Activated B cell treated with CpG ODN at 0.5 μM for 24 hours (primary cell): ENCODE measurements at regions of chr5 and their contacts with region 1.

Region 1: DNA sequence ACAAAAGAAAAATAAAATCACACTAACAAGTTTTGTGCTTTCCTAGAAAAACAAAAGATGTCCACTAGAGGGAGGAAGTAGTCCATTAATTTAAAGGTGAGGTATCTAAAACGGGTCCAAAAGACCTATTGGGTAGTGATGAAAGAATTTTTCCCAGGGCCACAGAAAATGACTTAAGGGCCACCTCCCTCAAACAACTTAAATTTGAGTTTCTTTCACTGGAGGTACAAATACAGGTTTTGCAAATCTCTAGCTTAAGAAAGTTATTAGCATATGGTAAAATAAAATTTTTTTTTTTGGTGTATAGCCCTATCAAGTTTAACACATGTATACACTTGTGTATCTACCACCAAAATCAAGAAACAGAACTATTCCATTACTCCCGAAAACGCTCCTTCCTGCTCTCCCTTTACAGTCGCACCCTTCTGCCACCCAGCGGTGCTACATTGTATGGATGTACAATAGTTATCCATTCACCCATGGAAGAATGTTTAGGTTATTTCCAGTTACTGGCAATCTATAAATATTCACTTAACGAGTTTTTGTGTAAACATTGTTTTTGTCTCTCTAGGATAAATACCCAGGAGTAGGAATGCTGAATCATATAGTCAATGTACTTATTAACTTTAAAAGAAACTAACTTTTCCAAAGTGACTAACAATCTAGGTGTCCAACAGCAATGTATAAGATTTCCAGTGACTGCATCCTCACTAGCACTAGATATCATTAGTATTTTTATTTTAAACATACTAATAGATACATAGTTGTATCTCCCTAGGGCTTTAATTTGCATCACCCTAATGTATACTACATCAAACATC is 21.9 kb downstream of the DEPDC1B start:
- DNase-seq: no peak
- ATAC-seq: no peak
- H3K4me3 Mint-ChIP-seq: no peak overlapping the region
- H3K27ac Mint-ChIP-seq: no peak overlapping the region
- H3K4me1 Mint-ChIP-seq: no peaks in the 10 kb centered on the region
- H3K27me3 Mint-ChIP-seq: no peaks in the 10 kb centered on the region
- CTCF ChIP-seq: no peak

Region 2: GRCh38 chr5:60843936-60844905 is 166.2 kb after region 1 on chr5 and contains the start of gene ELOVL7:
- CTCF ChIA-PET with region 1: no interaction called
- POLR2A ChIA-PET with region 1: no interaction called
- intact Hi-C with region 1: loop called (anchors 5 kb)
- DNase-seq: peak; percentile 38
- ATAC-seq: peak; percentile 91
- H3K4me3 Mint-ChIP-seq: peak within 1 kb of the TSS; percentile 83
- H3K27ac Mint-ChIP-seq: no peak within 1 kb of the TSS
- H3K4me1 Mint-ChIP-seq: peaks cover 11% of the 10 kb centered on the region
- H3K27me3 Mint-ChIP-seq: peaks cover 57% of the 10 kb centered on the region
- CTCF ChIP-seq: no peak
- total RNA-seq, gene ELOVL7: 0.32 and 0.69 TPM in 2 replicates

Region 3: GRCh38 chr5:60883229-60883628 is 205.2 kb after region 1 on chr5:
- CTCF ChIA-PET with region 1: no interaction called
- POLR2A ChIA-PET with region 1: no interaction called
- intact Hi-C with region 1: loop called (anchors 1 kb)
- DNase-seq: no peak
- ATAC-seq: no peak
- H3K4me3 Mint-ChIP-seq: no peak overlapping the region
- H3K27ac Mint-ChIP-seq: no peak overlapping the region
- H3K4me1 Mint-ChIP-seq: no peaks in the 10 kb centered on the region
- H3K27me3 Mint-ChIP-seq: no peaks in the 10 kb centered on the region
- CTCF ChIP-seq: no peak

Region 4: DNA sequence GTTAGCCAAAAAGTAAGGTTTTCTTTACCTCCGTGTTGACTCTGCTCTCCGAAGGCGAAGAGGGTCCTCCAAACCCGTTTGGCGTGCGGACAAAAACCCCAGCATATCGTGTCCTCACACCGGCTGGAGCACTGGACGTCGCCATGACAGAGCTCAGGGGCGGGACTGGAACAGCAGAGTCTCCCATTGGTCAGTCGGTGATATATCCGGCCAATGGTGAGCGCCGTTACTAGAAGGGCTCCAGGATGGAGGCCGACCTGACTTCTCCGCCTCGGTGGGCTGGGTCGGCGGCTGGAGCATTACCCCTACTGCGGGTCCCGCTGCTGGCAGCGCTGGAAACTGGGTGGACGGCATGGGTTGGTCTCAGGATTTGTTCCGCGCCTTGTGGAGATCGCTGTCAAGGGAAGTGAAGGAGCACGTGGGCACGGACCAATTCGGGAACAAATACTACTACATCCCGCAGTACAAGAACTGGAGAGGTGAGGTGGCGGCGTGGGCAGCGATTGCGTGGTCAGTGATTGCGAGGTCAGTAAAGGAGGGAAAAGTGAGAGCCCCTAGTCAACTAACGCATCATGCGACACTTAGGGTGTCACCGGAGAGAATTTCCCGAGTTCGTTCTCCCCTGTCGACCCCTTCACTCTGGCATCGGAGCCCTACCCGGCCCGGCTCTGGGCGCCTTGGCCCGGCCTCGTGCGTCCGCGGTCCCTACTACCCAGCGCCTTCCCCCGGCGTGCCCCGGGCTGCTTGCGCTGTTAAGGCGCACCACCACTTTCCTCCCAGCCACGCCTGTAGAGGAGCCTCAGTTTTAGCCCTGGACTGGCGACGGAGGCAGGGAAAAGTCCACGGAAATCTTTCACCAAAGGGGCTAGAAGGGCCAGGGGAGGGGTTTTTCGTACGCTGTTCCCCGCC is 267.1 kb after region 1 on chr5 and contains the starts of genes ERCC8 and NDUFAF2:
- CTCF ChIA-PET with region 1: no interaction called
- POLR2A ChIA-PET with region 1: interaction called, 3 read pairs
- intact Hi-C with region 1: loop called (anchors 5 kb)
- DNase-seq: peak; percentile 75
- ATAC-seq: peak; percentile 98
- H3K4me3 Mint-ChIP-seq: no peak within 1 kb of the TSS
- H3K27ac Mint-ChIP-seq: no peak within 1 kb of the TSS
- H3K4me1 Mint-ChIP-seq: peaks cover 28% of the 10 kb centered on the region
- H3K27me3 Mint-ChIP-seq: no peaks in the 10 kb centered on the region
- CTCF ChIP-seq: no peak
- total RNA-seq, gene ERCC8: 10.7 and 11.2 TPM in 2 replicates
- total RNA-seq, gene NDUFAF2: 13.1 and 20.0 TPM in 2 replicates

Region 5: DNA sequence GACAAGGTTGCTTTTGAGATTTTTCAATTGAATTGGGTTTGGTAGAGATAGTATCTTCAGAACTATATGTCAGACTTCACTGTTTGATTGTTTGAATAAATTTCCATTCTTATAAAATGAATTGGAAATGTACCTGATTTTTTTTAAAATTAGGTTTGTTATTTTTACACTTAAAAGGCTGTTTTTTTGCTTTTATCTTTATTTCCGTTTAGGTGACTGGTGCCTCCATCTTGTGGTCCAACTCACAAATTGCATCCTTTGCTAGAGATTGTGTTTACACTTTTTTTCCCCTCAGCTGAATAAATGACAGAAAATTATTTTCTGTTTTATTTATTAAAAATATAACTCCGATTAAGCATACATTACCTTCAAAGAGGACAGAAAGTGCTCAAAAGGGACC is 282.5 kb after region 1 on chr5:
- CTCF ChIA-PET with region 1: interaction called, 8 read pairs
- POLR2A ChIA-PET with region 1: no interaction called
- intact Hi-C with region 1: loop called (anchors 1 kb)
- DNase-seq: no peak
- ATAC-seq: no peak
- H3K4me3 Mint-ChIP-seq: no peak overlapping the region
- H3K27ac Mint-ChIP-seq: no peak overlapping the region
- H3K4me1 Mint-ChIP-seq: peaks cover 2% of the 10 kb centered on the region
- H3K27me3 Mint-ChIP-seq: no peaks in the 10 kb centered on the region
- CTCF ChIP-seq: no peak

Region 6: GRCh38 chr5:61658592-61659008 is 980.5 kb after region 1 on chr5:
- CTCF ChIA-PET with region 1: interaction called, 4 read pairs
- POLR2A ChIA-PET with region 1: no interaction called
- intact Hi-C with region 1: loop called (anchors 1 kb)
- DNase-seq: peak; percentile 70
- ATAC-seq: peak; percentile 64
- H3K4me3 Mint-ChIP-seq: no peak overlapping the region
- H3K27ac Mint-ChIP-seq: no peak overlapping the region
- H3K4me1 Mint-ChIP-seq: no peaks in the 10 kb centered on the region
- H3K27me3 Mint-ChIP-seq: peaks cover 8% of the 10 kb centered on the region
- CTCF ChIP-seq: peak; percentile 88

Region 7: DNA sequence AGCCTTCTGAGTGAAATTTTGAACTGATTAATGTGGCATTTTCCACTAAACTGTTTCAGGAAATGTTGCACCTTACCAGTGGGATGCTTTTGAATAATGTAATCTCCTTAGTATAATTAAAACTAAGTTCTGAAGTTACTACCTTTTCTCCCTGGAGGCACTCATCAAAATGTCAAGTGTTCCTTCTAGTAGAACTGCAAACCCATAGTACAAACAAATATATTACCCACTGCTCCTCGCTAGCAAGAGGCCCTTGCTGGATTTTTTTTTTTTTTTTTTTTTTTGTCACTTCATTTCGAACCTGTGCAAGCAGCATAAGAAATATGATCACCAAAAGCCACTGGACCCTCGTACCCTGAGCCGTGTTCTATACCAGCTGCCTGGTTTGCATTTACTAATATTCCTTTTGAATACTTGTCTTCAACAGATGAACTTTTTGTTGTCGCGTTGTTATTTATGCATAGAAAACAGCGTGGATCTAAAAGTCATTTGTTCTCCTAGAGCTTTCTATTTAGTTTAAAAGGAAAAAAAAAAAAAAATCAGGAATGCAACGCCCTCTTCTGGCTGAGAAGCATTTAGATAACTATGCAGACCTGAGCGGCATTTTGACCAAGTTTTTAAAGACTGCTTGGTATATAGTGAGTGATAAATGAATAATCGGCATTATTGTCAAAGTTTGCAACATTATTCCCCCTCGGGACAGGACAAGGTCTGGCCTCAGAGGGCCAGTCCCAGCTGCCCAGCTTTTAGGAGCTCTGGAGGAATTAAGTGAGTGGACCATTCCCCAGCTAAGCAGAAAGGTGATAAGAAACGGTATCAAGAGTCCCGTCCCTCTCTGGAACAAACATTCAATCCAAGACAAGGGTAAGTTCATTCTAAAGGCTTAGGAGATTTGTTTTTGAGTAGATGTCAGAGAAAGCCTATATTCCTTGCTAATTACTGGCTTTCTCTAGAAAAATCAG is 1465.5 kb after region 1 on chr5:
- CTCF ChIA-PET with region 1: no interaction called
- POLR2A ChIA-PET with region 1: no interaction called
- intact Hi-C with region 1: loop called (anchors 5 kb)
- DNase-seq: no peak
- ATAC-seq: no peak
- H3K4me3 Mint-ChIP-seq: no peak overlapping the region
- H3K27ac Mint-ChIP-seq: no peak overlapping the region
- H3K4me1 Mint-ChIP-seq: no peaks in the 10 kb centered on the region
- H3K27me3 Mint-ChIP-seq: peaks cover 25% of the 10 kb centered on the region
- CTCF ChIP-seq: no peak